Activated naive CD4-positive, alpha-beta T cell treated with anti-CD3 and anti-CD28 coated beads for 36 hours (primary cell): ENCODE measurements at regions of chr19 and their contacts with region 1.

Region 1: DNA sequence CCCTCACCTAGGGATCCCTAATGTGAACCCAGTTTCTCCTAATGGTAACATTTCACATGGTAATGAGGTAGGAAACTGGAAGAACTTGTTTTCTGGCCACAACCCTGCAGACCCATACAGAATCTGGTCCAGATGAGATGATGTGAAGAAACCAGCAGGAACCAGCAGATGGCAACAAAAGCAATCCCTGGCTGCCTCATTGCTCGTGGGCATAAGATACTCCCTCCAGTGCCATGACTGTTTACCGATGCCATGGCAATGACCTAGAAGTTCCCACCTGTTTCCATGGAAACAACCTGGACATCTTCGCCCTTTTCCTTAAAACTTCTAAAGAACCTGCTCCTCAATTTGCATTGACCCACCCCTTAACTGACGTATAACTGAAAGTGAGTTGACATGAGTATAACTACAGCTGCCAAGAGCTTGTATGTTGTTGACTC is 1.5 kb upstream of the CD209 start:
- DNase-seq: peak; percentile 40
- H3K4me3 Mint-ChIP-seq: no peak overlapping the region
- H3K27ac Mint-ChIP-seq: no peak overlapping the region
- H3K4me1 Mint-ChIP-seq: peaks cover 25% of the 10 kb centered on the region
- H3K27me3 Mint-ChIP-seq: peaks cover 13% of the 10 kb centered on the region

Region 2: GRCh38 chr19:7535035-7535992 is 213.5 kb before region 1 on chr19 and contains the start of gene PNPLA6:
- CTCF ChIA-PET with region 1: no interaction called
- intact Hi-C with region 1: no loop called
- DNase-seq: peak; percentile 95
- H3K4me3 Mint-ChIP-seq: peak within 1 kb of the TSS; percentile 92
- H3K27ac Mint-ChIP-seq: peak within 1 kb of the TSS; percentile 84
- H3K4me1 Mint-ChIP-seq: peaks cover 20% of the 10 kb centered on the region
- H3K27me3 Mint-ChIP-seq: no peaks in the 10 kb centered on the region
- total RNA-seq, gene PNPLA6: 75.5 to 81.7 TPM

Region 3: DNA sequence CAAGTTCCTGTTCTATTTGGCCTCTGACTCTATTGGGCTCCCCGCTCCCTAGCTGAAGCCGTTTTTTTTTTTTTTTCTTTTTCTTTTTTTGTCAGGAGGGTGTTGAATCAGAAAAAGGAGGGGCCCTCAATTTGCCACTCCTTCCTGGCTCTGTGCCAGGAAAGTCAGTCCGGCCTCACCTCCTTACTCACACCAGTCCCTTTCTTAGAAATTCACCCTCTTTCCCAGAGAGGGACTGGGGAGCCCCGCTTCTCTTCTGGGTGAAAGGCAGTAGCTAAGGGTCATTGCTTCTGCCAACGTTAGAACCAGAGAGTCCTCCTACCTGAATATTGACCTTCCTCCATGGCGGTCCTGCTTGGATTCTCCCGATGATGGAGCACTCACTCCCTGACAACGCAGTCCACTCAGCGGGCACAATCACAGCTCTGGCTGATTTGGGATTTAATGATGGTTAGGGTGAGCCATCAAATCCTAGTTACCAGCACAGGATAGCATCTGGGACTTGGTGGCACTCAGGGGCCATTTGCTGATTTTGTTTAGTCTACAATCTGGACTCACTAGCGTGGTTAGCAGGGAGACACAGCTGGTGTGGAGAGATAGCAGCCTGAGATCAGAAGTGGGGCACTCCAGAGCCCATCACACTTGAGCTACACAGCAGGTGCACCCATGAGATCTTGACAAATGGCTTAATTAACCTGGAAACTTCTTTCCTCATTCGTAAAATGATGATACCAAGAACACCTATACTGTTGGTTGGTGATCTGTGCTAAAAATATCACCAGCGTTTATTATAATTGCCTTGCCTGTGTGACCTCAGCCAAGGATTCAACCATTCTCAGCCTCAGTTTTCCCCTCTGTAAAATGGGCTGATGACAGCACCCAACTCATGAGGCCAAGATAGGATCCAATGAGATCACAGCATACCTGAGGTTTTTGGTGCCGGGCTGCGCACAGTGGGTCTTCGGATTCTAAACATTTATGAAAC is 49.1 kb before region 1 on chr19:
- CTCF ChIA-PET with region 1: no interaction called
- intact Hi-C with region 1: loop called (anchors 1 kb)
- DNase-seq: peak; percentile 77
- H3K4me3 Mint-ChIP-seq: peak overlapping the region; percentile 22
- H3K27ac Mint-ChIP-seq: peak overlapping the region; percentile 66
- H3K4me1 Mint-ChIP-seq: peaks cover 30% of the 10 kb centered on the region
- H3K27me3 Mint-ChIP-seq: peaks cover 8% of the 10 kb centered on the region

Region 4: GRCh38 chr19:7738023-7738422 is 10.8 kb before region 1 on chr19:
- CTCF ChIA-PET with region 1: no interaction called
- intact Hi-C with region 1: loop called (anchors 1 kb)
- DNase-seq: peak; percentile 53
- H3K4me3 Mint-ChIP-seq: no peak overlapping the region
- H3K27ac Mint-ChIP-seq: peak overlapping the region; percentile 11
- H3K4me1 Mint-ChIP-seq: peaks cover 14% of the 10 kb centered on the region
- H3K27me3 Mint-ChIP-seq: peaks cover 26% of the 10 kb centered on the region

Region 5: GRCh38 chr19:7772752-7773291 is 24.0 kb after region 1 on chr19:
- CTCF ChIA-PET with region 1: interaction called, 3 read pairs
- intact Hi-C with region 1: loop called (anchors 1 kb)
- DNase-seq: peak; percentile 71
- H3K4me3 Mint-ChIP-seq: no peak overlapping the region
- H3K27ac Mint-ChIP-seq: peak overlapping the region; percentile 77
- H3K4me1 Mint-ChIP-seq: peaks cover 27% of the 10 kb centered on the region
- H3K27me3 Mint-ChIP-seq: peaks cover 4% of the 10 kb centered on the region

Region 6: DNA sequence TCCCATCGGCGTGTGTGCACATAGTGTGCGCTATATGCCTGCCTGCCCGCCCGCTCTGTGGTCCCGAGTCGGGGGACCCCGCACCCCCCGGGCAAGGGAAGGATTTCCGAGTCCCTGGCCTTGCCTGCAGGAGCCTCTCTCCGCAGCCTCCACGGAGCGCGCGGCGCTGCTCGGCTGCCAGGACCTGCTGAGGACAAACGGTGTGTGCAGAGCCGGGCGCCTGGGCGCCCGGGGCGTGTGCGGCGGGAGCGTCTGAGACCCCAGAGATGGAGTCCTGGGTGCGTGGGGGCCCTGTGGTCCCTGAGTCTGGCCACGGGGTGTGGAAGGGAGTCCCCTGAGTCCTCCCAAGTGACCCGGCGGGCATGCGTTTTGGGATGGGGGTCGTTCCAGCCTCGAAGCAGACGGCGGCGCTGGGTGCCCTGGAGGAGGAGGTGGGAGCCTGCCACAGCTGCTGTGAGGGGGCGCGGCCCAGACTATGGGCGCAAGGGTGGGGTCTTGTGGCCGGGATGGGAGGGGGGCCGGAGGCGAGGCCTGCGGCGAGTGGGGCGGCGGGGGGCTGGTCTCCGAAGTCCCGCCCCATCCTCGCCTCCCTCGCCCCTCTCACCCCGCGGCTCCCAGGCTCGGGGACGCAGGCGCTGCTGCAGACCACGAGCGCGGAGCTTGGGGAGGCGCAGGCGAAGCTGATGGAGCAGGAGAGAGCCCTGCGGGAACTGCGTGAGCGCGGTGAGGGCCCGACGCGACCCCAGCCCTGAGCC is 39.6 kb after region 1 on chr19:
- CTCF ChIA-PET with region 1: no interaction called
- intact Hi-C with region 1: no loop called
- DNase-seq: no peak
- H3K4me3 Mint-ChIP-seq: no peak overlapping the region
- H3K27ac Mint-ChIP-seq: no peak overlapping the region
- H3K4me1 Mint-ChIP-seq: peaks cover 19% of the 10 kb centered on the region
- H3K27me3 Mint-ChIP-seq: peaks cover 48% of the 10 kb centered on the region

Region 7: GRCh38 chr19:7799640-7800355 is 51.0 kb after region 1 on chr19:
- CTCF ChIA-PET with region 1: interaction called, 5 read pairs
- intact Hi-C with region 1: loop called (anchors 1 kb)
- DNase-seq: peak; percentile 76
- H3K4me3 Mint-ChIP-seq: peak overlapping the region; percentile 60
- H3K27ac Mint-ChIP-seq: no peak overlapping the region
- H3K4me1 Mint-ChIP-seq: peaks cover 5% of the 10 kb centered on the region
- H3K27me3 Mint-ChIP-seq: peaks cover 14% of the 10 kb centered on the region

Region 8: GRCh38 chr19:7806876-7807275 is 58.1 kb after region 1 on chr19:
- CTCF ChIA-PET with region 1: no interaction called
- intact Hi-C with region 1: loop called (anchors 1 kb)
- DNase-seq: no peak
- H3K4me3 Mint-ChIP-seq: no peak overlapping the region
- H3K27ac Mint-ChIP-seq: no peak overlapping the region
- H3K4me1 Mint-ChIP-seq: peaks cover 12% of the 10 kb centered on the region
- H3K27me3 Mint-ChIP-seq: peaks cover 24% of the 10 kb centered on the region